Activated B cell treated with CpG ODN at 0.5 μM for 24 hours (primary cell): ENCODE measurements at regions of chr10 and their contacts with region 1.

Region 1: DNA sequence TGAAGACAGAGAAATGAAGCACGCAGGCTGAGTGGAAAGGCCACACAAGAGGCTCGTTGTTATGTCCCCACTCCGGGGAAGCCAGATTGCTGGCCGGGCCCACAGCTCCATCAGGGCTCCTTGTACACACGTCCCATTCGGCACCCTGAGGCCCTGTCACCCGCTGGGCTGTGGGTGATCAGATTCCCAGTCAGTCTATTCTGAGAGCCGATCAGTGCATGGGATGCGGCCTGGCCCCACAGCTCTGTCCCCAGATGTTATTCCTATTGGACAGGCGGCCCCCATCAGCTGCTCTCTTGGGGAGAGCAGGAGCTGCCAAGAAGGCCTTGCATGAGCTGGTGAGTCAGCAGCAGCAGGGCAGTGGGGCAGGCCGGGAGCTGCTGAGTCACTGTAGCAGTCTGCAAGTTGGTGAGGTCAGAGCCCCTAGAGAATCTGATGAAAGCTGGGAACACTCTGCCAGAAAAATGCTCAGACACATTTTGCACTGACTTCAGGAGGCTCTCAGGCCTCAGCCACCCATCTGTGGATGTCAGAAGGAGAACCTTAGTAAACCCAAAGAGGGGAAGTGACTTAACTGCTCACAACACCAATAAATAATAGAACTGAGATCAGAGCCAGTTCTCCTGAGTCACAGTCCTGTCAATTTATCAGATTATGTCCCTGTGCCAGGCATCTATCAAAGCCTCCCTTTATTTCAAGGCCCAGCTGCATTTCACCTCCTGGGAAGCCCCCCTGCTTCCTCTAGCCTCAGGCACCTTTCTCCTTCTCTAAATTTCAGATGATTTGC is 9.4 kb upstream of the PSAP start:
- DNase-seq: no peak
- ATAC-seq: peak; percentile 83
- H3K4me3 Mint-ChIP-seq: peak overlapping the region; percentile 19
- H3K27ac Mint-ChIP-seq: peak overlapping the region; percentile 50
- H3K4me1 Mint-ChIP-seq: peaks cover 24% of the 10 kb centered on the region
- H3K27me3 Mint-ChIP-seq: no peaks in the 10 kb centered on the region
- CTCF ChIP-seq: no peak

Region 2: DNA sequence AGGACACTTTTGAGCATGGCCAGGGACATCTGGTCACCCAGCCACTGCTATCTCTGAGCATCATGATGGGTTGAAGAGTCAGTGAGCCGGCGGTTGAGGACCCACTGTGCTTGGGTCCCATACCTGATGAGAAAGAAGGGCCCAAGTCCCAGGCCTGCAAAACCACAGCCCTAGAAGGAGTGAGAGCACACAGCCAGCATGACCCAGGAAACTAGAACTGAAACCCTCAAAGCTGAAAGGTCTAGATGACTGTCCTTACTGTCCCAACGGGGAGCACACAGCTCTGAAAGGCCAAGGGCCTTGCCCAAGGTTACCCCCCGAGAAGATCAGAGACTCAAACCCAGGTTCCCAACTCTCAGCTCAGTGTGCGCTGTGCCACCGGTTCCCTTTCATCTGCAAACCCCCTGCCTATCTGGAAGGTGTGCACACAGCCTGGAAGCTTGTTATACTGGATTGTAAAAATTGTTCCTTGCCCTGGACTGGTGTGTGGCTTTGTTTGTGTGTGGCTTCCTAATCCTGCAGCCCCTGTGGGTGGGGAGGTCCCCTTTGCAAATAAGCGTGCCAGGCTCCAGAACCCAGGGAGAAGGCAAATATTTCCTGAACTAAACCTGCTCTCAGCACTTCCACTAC is 13.3 kb after region 1 on chr10:
- CTCF ChIA-PET with region 1: interaction called, 3 read pairs
- POLR2A ChIA-PET with region 1: interaction called, 6 read pairs
- intact Hi-C with region 1: loop called (anchors 2 kb)
- DNase-seq: no peak
- ATAC-seq: peak; percentile 78
- H3K4me3 Mint-ChIP-seq: peak overlapping the region; percentile 58
- H3K27ac Mint-ChIP-seq: peak overlapping the region; percentile 61
- H3K4me1 Mint-ChIP-seq: peaks cover 46% of the 10 kb centered on the region
- H3K27me3 Mint-ChIP-seq: no peaks in the 10 kb centered on the region
- CTCF ChIP-seq: no peak